Common myeloid progenitor, CD34-positive (primary cell): ENCODE measurements at regions of chr17 and their contacts with region 1.

Region 1: GRCh38 chr17:74961657-74962490 is 10.7 kb downstream of the HID1 start:
- DNase-seq: peak; percentile 80 to 88 (median 81)
- H3K4me3 ChIP-seq: no peak overlapping the region
- H3K27ac ChIP-seq: no peak overlapping the region
- H3K4me1 ChIP-seq: peaks cover 0 to 6% (median 3%) of the 10 kb centered on the region in 4 experiments
- H3K27me3 ChIP-seq: peaks cover 0 to 4% (median 2%) of the 10 kb centered on the region in 5 experiments

Region 2: GRCh38 chr17:74849932-74850709 is 111.8 kb before region 1 on chr17:
- CTCF ChIA-PET with region 1: no interaction called
- POLR2A ChIA-PET with region 1: no interaction called
- DNase-seq: no peak
- H3K4me3 ChIP-seq: no peak overlapping the region
- H3K27ac ChIP-seq: no peak overlapping the region
- H3K4me1 ChIP-seq: peaks cover 0 to 9% (median 7%) of the 10 kb centered on the region in 4 experiments
- H3K27me3 ChIP-seq: peaks cover 0 to 67% (median 15%) of the 10 kb centered on the region in 5 experiments

Region 3: GRCh38 chr17:74923533-74924249 is 38.2 kb before region 1 on chr17:
- CTCF ChIA-PET with region 1: interaction called, 64 read pairs
- POLR2A ChIA-PET with region 1: no interaction called
- DNase-seq: peak; percentile 40 to 69 (median 67)
- H3K4me3 ChIP-seq: peak overlapping the region in 4 of 7 experiments; percentile 25 to 67 (median 40)
- H3K27ac ChIP-seq: no peak overlapping the region
- H3K4me1 ChIP-seq: peaks cover 0 to 25% (median 21%) of the 10 kb centered on the region in 4 experiments
- H3K27me3 ChIP-seq: peaks cover 0 to 84% (median 38%) of the 10 kb centered on the region in 5 experiments

Region 4: GRCh38 chr17:74937064-74938051 is 24.5 kb before region 1 on chr17:
- CTCF ChIA-PET with region 1: interaction called, 10 read pairs
- POLR2A ChIA-PET with region 1: no interaction called
- DNase-seq: no peak
- H3K4me3 ChIP-seq: no peak overlapping the region
- H3K27ac ChIP-seq: no peak overlapping the region
- H3K4me1 ChIP-seq: peaks cover 0 to 9% (median 4%) of the 10 kb centered on the region in 4 experiments
- H3K27me3 ChIP-seq: peaks cover 2 to 70% (median 34%) of the 10 kb centered on the region in 5 experiments

Region 5: GRCh38 chr17:75012346-75013091 is 50.6 kb after region 1 on chr17 and contains the start of gene MRPL58:
- CTCF ChIA-PET with region 1: interaction called, 154 read pairs
- POLR2A ChIA-PET with region 1: interaction called, 8 read pairs
- DNase-seq: peak; percentile 88 to 94 (median 92)
- H3K4me3 ChIP-seq: peak within 1 kb of the TSS; percentile 53 to 94 (median 87)
- H3K27ac ChIP-seq: peak within 1 kb of the TSS; percentile 76 to 84
- H3K4me1 ChIP-seq: peaks cover 8 to 29% (median 17%) of the 10 kb centered on the region in 4 experiments
- H3K27me3 ChIP-seq: no peaks in the 10 kb centered on the region

Region 6: GRCh38 chr17:75059369-75060345 is 97.8 kb after region 1 on chr17:
- CTCF ChIA-PET with region 1: interaction called, 10 read pairs
- POLR2A ChIA-PET with region 1: no interaction called
- DNase-seq: peak; percentile 69 to 79 (median 78)
- H3K4me3 ChIP-seq: no peak overlapping the region
- H3K27ac ChIP-seq: peak overlapping the region; percentile 46 to 68
- H3K4me1 ChIP-seq: peaks cover 1 to 10% (median 5%) of the 10 kb centered on the region in 4 experiments
- H3K27me3 ChIP-seq: no peaks in the 10 kb centered on the region